Calu3 (cell line): ENCODE measurements at regions of chr20 and their contacts with region 1.

Region 1: DNA sequence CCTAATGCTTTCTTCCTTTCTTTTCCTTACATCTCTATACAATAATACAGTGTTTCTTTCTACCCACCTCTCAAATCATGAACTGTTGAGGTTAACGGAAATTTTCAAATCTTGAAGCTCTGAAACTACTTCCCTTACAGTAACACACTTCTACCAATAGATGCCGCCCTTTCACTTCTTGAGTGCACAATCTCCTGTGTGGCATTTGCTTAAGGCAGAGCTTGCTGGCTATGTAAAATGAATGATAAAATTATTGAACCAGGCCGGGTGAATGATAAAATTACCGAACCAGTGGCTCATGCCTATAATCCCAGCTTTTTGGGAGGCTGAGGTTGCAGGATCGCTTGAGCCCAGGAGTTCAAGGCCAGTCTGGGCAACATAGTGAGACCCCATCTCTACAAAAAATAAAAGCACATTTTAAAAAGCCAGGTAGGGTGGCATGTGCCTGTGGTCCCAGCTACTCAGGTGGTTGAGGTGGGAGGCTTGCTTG is 56.8 kb downstream of the KCNS1 start:
- DNase-seq: peak; percentile 67
- H3K4me3 Mint-ChIP-seq: no peak overlapping the region
- H3K27ac Mint-ChIP-seq: peak overlapping the region; percentile 8
- H3K4me1 Mint-ChIP-seq: peaks cover 33% of the 10 kb centered on the region
- H3K27me3 Mint-ChIP-seq: no peaks in the 10 kb centered on the region
- CTCF ChIP-seq: peak; percentile 73

Region 2: GRCh38 chr20:45011108-45011526 is 33.0 kb before region 1 on chr20:
- CTCF ChIA-PET with region 1: interaction called, 44 read pairs
- intact Hi-C with region 1: loop called (anchors 2 kb)
- DNase-seq: peak; percentile 75
- H3K4me3 Mint-ChIP-seq: no peak overlapping the region
- H3K27ac Mint-ChIP-seq: peak overlapping the region; percentile 11
- H3K4me1 Mint-ChIP-seq: peaks cover 42% of the 10 kb centered on the region
- H3K27me3 Mint-ChIP-seq: no peaks in the 10 kb centered on the region
- CTCF ChIP-seq: peak; percentile 74

Region 3: DNA sequence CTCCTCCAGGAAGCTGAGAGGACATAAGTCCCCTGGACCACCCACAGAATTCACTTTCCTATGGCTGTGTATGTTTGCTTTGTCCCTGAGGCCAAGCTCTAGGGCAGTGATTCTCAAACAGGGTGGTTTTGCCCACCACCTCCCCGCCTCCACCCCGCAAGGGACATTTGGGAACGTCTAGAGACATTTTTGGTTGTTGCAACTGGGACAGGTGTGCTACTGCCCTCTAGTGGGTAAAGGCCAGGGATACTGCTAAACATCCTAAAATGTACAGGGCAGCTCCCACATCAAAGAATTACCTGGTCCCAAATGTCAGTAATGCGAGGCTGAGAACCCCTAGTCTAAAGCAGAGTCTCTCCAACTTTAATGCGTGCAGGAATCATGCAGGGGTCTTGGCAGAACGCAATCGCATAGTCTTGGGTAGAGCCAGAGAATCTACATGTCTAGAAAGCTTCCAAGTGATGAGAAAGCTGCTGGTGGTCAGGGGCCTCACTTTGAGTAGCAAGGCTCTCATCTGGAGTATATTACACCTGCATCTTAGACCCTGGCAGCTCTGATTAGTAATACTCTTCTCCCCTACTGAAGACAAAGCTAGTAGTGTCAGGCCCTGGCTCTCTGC is 51.7 kb after region 1 on chr20:
- CTCF ChIA-PET with region 1: interaction called, 70 read pairs
- intact Hi-C with region 1: no loop called
- DNase-seq: peak; percentile 75
- H3K4me3 Mint-ChIP-seq: no peak overlapping the region
- H3K27ac Mint-ChIP-seq: no peak overlapping the region
- H3K4me1 Mint-ChIP-seq: peaks cover 9% of the 10 kb centered on the region
- H3K27me3 Mint-ChIP-seq: no peaks in the 10 kb centered on the region
- CTCF ChIP-seq: peak; percentile 76

Region 4: DNA sequence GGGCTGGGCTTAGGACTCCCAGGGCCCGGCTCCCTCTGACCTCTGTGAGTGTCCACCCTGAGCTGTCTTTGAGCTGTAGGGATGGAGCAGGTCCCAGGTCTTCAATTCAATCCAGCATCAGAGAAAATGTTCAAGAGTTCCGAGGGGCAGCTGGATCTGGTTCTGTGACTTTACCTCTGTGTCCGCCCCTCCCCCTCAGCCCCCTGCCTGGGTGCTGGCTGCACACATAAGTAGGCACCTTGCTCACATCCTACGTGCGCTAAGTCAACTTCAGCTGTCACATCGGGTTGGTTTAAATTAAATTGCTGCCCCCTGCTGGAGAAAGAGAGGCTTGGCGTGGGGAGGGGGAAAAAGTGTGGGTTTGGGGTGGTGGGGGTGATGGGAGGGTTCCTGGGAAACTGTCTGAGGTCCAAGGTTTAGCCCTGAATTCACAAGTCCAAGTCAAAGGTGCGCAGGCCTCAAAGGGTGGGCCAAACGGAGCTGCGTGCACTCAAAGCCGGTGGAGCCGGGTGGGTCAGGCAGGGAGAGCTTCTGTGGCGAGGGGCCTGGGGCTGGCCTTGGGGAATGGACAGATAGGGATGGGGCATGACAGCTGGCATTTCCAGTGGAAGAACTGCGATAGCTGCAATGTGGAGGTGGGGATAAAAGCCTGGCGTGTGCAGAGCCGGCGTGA is 67.8 kb after region 1 on chr20:
- CTCF ChIA-PET with region 1: interaction called, 61 read pairs
- intact Hi-C with region 1: no loop called
- DNase-seq: peak; percentile 43
- H3K4me3 Mint-ChIP-seq: no peak overlapping the region
- H3K27ac Mint-ChIP-seq: no peak overlapping the region
- H3K4me1 Mint-ChIP-seq: no peaks in the 10 kb centered on the region
- H3K27me3 Mint-ChIP-seq: peaks cover 36% of the 10 kb centered on the region
- CTCF ChIP-seq: peak; percentile 86

Region 5: DNA sequence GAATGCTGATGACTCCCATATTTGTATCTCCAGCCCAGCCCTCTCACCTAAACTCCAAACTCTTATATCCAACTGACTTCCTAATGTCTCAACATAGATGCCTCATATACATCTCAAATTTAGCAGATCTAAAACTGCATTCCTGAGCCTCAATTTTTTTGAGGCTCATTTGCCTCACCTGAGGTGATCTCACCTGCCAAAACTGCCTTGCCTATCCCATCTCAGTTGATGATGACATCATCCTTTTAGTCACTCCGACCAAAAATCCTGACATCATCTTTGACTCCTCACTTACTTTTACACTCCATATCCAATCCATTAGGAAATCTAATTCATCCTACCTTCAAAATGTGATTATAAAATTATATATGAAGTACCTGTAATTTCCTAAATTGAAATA is 235.9 kb after region 1 on chr20:
- CTCF ChIA-PET with region 1: no interaction called
- intact Hi-C with region 1: no loop called
- DNase-seq: no peak
- H3K4me3 Mint-ChIP-seq: no peak overlapping the region
- H3K27ac Mint-ChIP-seq: no peak overlapping the region
- H3K4me1 Mint-ChIP-seq: no peaks in the 10 kb centered on the region
- H3K27me3 Mint-ChIP-seq: peaks cover 47% of the 10 kb centered on the region
- CTCF ChIP-seq: no peak

Region 6: DNA sequence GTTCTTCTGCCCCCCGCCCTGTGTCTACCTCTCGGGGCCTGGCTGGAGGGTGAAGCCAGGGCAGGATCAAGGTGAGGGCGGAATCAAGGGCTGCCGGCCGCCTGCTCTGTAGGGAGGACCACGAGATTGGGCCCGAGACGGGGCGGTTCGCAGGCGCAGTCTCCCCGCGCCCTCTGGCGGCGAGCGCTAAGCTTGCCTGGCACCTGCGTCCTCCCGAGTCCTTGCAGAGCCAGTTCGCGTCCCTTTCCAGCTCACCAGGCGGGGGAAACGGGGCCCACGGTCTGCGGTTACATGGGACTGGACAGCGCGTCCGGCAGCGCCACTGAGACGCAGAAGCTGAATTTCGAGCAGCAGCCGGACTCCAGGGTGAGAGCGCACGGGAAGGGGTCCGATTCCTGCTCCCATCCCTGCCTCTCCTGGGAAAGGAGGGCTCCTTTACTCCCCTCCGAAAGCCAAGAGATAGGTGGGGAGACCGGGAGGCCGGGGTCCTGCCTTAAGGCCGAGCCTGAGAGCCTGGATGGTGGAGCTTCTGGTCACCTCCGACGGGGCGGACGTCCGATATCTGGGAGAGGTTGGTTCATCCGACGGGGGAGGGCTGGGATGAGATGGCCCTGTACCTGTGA is 267.6 kb after region 1 on chr20:
- CTCF ChIA-PET with region 1: interaction called, 16 read pairs
- intact Hi-C with region 1: no loop called
- DNase-seq: peak; percentile 92
- H3K4me3 Mint-ChIP-seq: no peak overlapping the region
- H3K27ac Mint-ChIP-seq: no peak overlapping the region
- H3K4me1 Mint-ChIP-seq: no peaks in the 10 kb centered on the region
- H3K27me3 Mint-ChIP-seq: peaks cover 94% of the 10 kb centered on the region
- CTCF ChIP-seq: peak; percentile 93